ENCODE measurements at regions of chr11 and their contacts with region 1.

Region 1: GRCh38 chr11:17384002-17384511 is 4.4 kb downstream of the KCNJ11 start:
- DNase-seq: peak; percentile 66
- ATAC-seq: peak; percentile 70
- H3K4me3 ChIP-seq: no peak overlapping the region
- H3K27ac ChIP-seq: no peak overlapping the region
- H3K4me1 ChIP-seq: peaks cover 0 to 12% of the 10 kb centered on the region in 2 experiments; a peak in 2 of 4 replicates
- H3K27me3 ChIP-seq: no peaks in the 10 kb centered on the region
- CTCF ChIP-seq: peak; percentile 87 to 94 (median 94)
- POLR2A ChIP-seq: no peak
- RAD21 ChIP-seq: peak; percentile 93

Region 2: DNA sequence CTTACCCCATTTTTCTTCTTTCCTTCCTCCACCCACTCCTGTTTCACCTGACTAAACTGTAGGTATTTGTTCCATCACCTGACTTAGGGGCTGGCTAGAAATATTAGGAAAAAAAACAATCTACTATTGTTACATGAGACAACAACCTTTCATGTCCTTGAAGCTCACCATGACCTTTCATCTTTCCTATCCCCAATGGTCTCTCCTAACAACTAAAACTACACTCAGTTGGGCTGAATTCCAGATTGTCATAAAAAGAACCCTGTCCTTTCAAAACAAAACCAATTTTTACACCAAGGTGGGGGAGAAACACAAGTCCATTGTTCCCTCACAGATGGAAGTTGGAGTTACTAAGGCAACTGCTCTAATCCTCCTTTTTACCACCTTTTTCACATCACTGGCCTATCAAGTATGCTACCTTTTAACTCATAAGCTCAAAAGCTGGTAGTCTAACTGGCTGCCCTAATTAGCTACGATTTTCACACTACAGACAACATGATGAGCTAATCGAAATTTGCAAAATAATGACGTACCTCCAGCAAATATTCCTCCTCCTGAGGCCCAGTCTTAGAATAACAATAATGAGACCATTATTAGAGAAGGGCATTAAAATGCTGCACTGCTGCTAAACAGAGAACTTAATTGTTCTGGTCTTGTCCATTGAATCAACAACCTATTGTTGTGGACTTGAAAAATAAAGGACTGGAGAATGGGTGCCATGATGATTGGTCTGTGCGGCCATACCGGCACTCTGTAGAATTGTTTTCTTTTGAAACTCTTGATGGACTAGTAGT is 981.2 kb before region 1 on chr11:
- CTCF ChIA-PET with region 1: no interaction called
- POLR2A ChIA-PET with region 1: no interaction called
- RAD21 ChIA-PET with region 1: no interaction called
- intact Hi-C with region 1: no loop called
- DNase-seq: no peak
- ATAC-seq: no peak
- H3K4me3 ChIP-seq: no peak overlapping the region
- H3K27ac ChIP-seq: no peak overlapping the region
- H3K4me1 ChIP-seq: no peaks in the 10 kb centered on the region
- H3K27me3 ChIP-seq: peaks cover 17% of the 10 kb centered on the region
- CTCF ChIP-seq: no peak
- POLR2A ChIP-seq: no peak
- RAD21 ChIP-seq: no peak

Region 3: GRCh38 chr11:17230867-17231851 is 152.9 kb before region 1 on chr11:
- CTCF ChIA-PET with region 1: interaction called, 9 read pairs
- POLR2A ChIA-PET with region 1: no interaction called
- RAD21 ChIA-PET with region 1: no interaction called
- intact Hi-C with region 1: loop called (anchors 1 kb)
- DNase-seq: no peak
- ATAC-seq: no peak
- H3K4me3 ChIP-seq: no peak overlapping the region
- H3K27ac ChIP-seq: no peak overlapping the region
- H3K4me1 ChIP-seq: no peaks in the 10 kb centered on the region; a peak in 1 of 4 replicates
- H3K27me3 ChIP-seq: no peaks in the 10 kb centered on the region
- CTCF ChIP-seq: no peak
- POLR2A ChIP-seq: no peak
- RAD21 ChIP-seq: no peak

Region 4: GRCh38 chr11:17293308-17293707 is 90.7 kb before region 1 on chr11:
- CTCF ChIA-PET with region 1: no interaction called
- POLR2A ChIA-PET with region 1: no interaction called
- RAD21 ChIA-PET with region 1: no interaction called
- intact Hi-C with region 1: no loop called
- DNase-seq: no peak
- ATAC-seq: no peak
- H3K4me3 ChIP-seq: no peak overlapping the region
- H3K27ac ChIP-seq: no peak overlapping the region
- H3K4me1 ChIP-seq: no peaks in the 10 kb centered on the region
- H3K27me3 ChIP-seq: no peaks in the 10 kb centered on the region
- CTCF ChIP-seq: no peak
- POLR2A ChIP-seq: no peak
- RAD21 ChIP-seq: no peak

Region 5: GRCh38 chr11:17471501-17471900 is 87.4 kb after region 1 on chr11:
- CTCF ChIA-PET with region 1: interaction called, 11 read pairs
- POLR2A ChIA-PET with region 1: no interaction called
- RAD21 ChIA-PET with region 1: interaction called in 1 of 2 experiments, 3 read pairs
- intact Hi-C with region 1: loop called (anchors 1 kb)
- DNase-seq: no peak
- ATAC-seq: no peak
- H3K4me3 ChIP-seq: no peak overlapping the region
- H3K27ac ChIP-seq: no peak overlapping the region
- H3K4me1 ChIP-seq: peaks cover 5 to 10% of the 10 kb centered on the region in 2 experiments; a peak in 2 of 4 replicates
- H3K27me3 ChIP-seq: no peaks in the 10 kb centered on the region
- CTCF ChIP-seq: peak in 2 of 3 experiments; percentile 8 to 45; a peak in 1 of 6 replicates
- POLR2A ChIP-seq: no peak
- RAD21 ChIP-seq: peak; percentile 61

Region 6: GRCh38 chr11:17504330-17505107 is 120.5 kb after region 1 on chr11:
- CTCF ChIA-PET with region 1: interaction called, 27 read pairs
- POLR2A ChIA-PET with region 1: no interaction called
- RAD21 ChIA-PET with region 1: interaction called, 4 to 8 read pairs
- intact Hi-C with region 1: loop called (anchors 1 kb)
- DNase-seq: peak; percentile 29
- ATAC-seq: peak; percentile 89
- H3K4me3 ChIP-seq: no peak overlapping the region
- H3K27ac ChIP-seq: no peak overlapping the region
- H3K4me1 ChIP-seq: peaks cover 5 to 12% of the 10 kb centered on the region in 2 experiments; a peak in 3 of 4 replicates
- H3K27me3 ChIP-seq: no peaks in the 10 kb centered on the region
- CTCF ChIP-seq: peak; percentile 91 to 92 (median 91)
- POLR2A ChIP-seq: no peak
- RAD21 ChIP-seq: peak; percentile 96

Region 7: GRCh38 chr11:17528181-17528691 is 144.2 kb after region 1 on chr11:
- CTCF ChIA-PET with region 1: interaction called, 32 read pairs
- POLR2A ChIA-PET with region 1: no interaction called
- RAD21 ChIA-PET with region 1: interaction called, 7 read pairs
- intact Hi-C with region 1: loop called (anchors 1 kb)
- DNase-seq: no peak
- ATAC-seq: peak; percentile 99
- H3K4me3 ChIP-seq: no peak overlapping the region
- H3K27ac ChIP-seq: no peak overlapping the region
- H3K4me1 ChIP-seq: no peaks in the 10 kb centered on the region
- H3K27me3 ChIP-seq: no peaks in the 10 kb centered on the region
- CTCF ChIP-seq: peak; percentile 79 to 95 (median 92)
- POLR2A ChIP-seq: no peak
- RAD21 ChIP-seq: peak; percentile 80

Region 8: DNA sequence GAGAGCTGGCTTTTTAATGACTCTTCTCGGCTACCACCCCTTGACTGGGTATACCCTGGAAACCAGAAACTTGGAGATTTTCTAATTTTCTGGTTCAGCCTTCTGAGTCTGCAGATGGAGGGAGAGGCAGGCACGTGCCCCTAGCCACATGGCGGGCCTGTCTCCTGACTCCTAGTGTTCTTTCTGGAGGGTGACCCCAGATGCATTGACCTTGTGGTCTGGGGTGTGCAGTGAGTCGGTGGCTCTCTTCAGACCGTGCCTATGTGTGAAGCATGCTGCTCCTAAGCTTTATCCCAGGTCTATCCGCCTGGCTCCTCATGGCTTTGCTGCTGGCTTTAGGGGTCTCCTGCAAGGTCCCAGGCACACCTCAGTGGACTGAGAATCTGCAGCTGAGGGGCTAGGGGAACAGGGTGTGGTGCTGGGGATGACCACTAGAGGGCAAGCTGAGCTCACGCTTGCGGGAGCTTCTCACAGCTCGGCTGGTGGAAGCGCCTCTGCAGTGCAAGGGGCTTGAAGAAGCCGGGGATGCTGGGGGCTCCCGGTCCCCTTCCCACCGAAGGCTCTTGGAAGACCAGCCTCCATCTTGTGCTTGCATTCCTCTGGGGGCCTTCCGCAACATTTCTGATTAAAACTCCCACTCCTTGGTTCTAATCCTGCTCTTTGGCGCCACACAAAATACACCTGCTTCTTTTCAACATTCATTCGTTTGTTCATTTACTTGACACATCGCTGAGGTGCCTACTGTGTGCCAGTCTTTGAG is 214.8 kb after region 1 on chr11:
- CTCF ChIA-PET with region 1: interaction called, 3 read pairs
- POLR2A ChIA-PET with region 1: no interaction called
- RAD21 ChIA-PET with region 1: no interaction called
- intact Hi-C with region 1: loop called (anchors 5 kb)
- DNase-seq: peak; percentile 24
- ATAC-seq: peak; percentile 97
- H3K4me3 ChIP-seq: no peak overlapping the region
- H3K27ac ChIP-seq: no peak overlapping the region
- H3K4me1 ChIP-seq: peaks cover 0 to 7% of the 10 kb centered on the region in 2 experiments; a peak in 2 of 4 replicates
- H3K27me3 ChIP-seq: no peaks in the 10 kb centered on the region
- CTCF ChIP-seq: peak; percentile 89 to 98 (median 95)
- POLR2A ChIP-seq: no peak
- RAD21 ChIP-seq: peak; percentile 94

Measured in HCT116 (cell line).